Activated CD4-positive, alpha-beta memory T cell treated with anti-CD3 and anti-CD28 coated beads for 36 hours (primary cell): ENCODE measurements at regions of chr16 and their contacts with region 1.

Region 1: GRCh38 chr16:11255737-11256660 is at the start of gene SOCS1:
- DNase-seq: peak; percentile 92
- H3K4me3 Mint-ChIP-seq: peak within 1 kb of the TSS; percentile 98
- H3K27ac Mint-ChIP-seq: peak within 1 kb of the TSS; percentile 99
- H3K4me1 Mint-ChIP-seq: peaks cover 48% of the 10 kb centered on the region
- H3K27me3 Mint-ChIP-seq: peaks cover 6% of the 10 kb centered on the region
- total RNA-seq, gene SOCS1: 146 to 152 TPM

Region 2: GRCh38 chr16:10981697-10982216 is 274.2 kb before region 1 on chr16:
- CTCF ChIA-PET with region 1: interaction called, 21 read pairs
- POLR2A ChIA-PET with region 1: interaction called, 21 read pairs
- intact Hi-C with region 1: no loop called
- DNase-seq: peak; percentile 79
- H3K4me3 Mint-ChIP-seq: peak overlapping the region; percentile 71
- H3K27ac Mint-ChIP-seq: peak overlapping the region; percentile 87
- H3K4me1 Mint-ChIP-seq: peaks cover 48% of the 10 kb centered on the region
- H3K27me3 Mint-ChIP-seq: no peaks in the 10 kb centered on the region

Region 3: GRCh38 chr16:11076259-11077018 is 179.6 kb before region 1 on chr16:
- CTCF ChIA-PET with region 1: interaction called, 6 read pairs
- POLR2A ChIA-PET with region 1: interaction called, 7 read pairs
- intact Hi-C with region 1: loop called (anchors 1 kb)
- DNase-seq: peak; percentile 88
- H3K4me3 Mint-ChIP-seq: no peak overlapping the region
- H3K27ac Mint-ChIP-seq: peak overlapping the region; percentile 94
- H3K4me1 Mint-ChIP-seq: peaks cover 96% of the 10 kb centered on the region
- H3K27me3 Mint-ChIP-seq: no peaks in the 10 kb centered on the region

Region 4: GRCh38 chr16:11114366-11115164 is 141.4 kb before region 1 on chr16:
- CTCF ChIA-PET with region 1: interaction called, 3 read pairs
- POLR2A ChIA-PET with region 1: interaction called, 15 read pairs
- intact Hi-C with region 1: no loop called
- DNase-seq: peak; percentile 71
- H3K4me3 Mint-ChIP-seq: peak overlapping the region; percentile 60
- H3K27ac Mint-ChIP-seq: peak overlapping the region; percentile 88
- H3K4me1 Mint-ChIP-seq: peaks cover 73% of the 10 kb centered on the region
- H3K27me3 Mint-ChIP-seq: no peaks in the 10 kb centered on the region

Region 5: GRCh38 chr16:11205754-11206581 is 50.0 kb before region 1 on chr16:
- CTCF ChIA-PET with region 1: no interaction called
- POLR2A ChIA-PET with region 1: interaction called, 10 read pairs
- intact Hi-C with region 1: no loop called
- DNase-seq: peak; percentile 62
- H3K4me3 Mint-ChIP-seq: no peak overlapping the region
- H3K27ac Mint-ChIP-seq: peak overlapping the region; percentile 91
- H3K4me1 Mint-ChIP-seq: peaks cover 29% of the 10 kb centered on the region
- H3K27me3 Mint-ChIP-seq: no peaks in the 10 kb centered on the region

Region 6: GRCh38 chr16:11312718-11313492 is 56.9 kb after region 1 on chr16:
- CTCF ChIA-PET with region 1: interaction called, 5 read pairs
- POLR2A ChIA-PET with region 1: interaction called, 12 read pairs
- intact Hi-C with region 1: no loop called
- DNase-seq: peak; percentile 42
- H3K4me3 Mint-ChIP-seq: no peak overlapping the region
- H3K27ac Mint-ChIP-seq: no peak overlapping the region
- H3K4me1 Mint-ChIP-seq: peaks cover 45% of the 10 kb centered on the region
- H3K27me3 Mint-ChIP-seq: no peaks in the 10 kb centered on the region

Region 7: DNA sequence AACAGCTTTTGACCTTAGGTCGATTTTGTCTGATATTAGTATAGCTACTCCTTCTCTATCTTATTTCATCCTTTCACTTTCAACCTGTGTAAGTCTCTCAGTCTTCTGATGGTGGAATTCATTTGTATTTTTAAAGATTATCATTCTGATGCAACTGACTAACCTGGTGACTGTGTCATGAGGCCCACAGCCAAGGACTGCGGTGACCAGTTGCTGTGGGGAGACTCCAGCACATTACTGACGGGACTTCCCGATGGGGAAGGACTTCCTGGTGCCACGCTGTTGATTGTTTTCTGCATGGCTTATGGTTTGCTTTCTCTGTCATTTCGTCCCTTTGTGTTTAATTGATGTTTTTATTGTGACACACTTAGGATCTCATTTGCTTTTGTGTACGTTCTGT is 123.4 kb after region 1 on chr16:
- CTCF ChIA-PET with region 1: interaction called, 3 read pairs
- POLR2A ChIA-PET with region 1: interaction called, 12 read pairs
- intact Hi-C with region 1: no loop called
- DNase-seq: peak; percentile 88
- H3K4me3 Mint-ChIP-seq: peak overlapping the region; percentile 9
- H3K27ac Mint-ChIP-seq: peak overlapping the region; percentile 79
- H3K4me1 Mint-ChIP-seq: peaks cover 23% of the 10 kb centered on the region
- H3K27me3 Mint-ChIP-seq: peaks cover 2% of the 10 kb centered on the region